Endothelial cell of umbilical vein (primary cell): ENCODE measurements at regions of chr12 and their contacts with region 1.

Region 1: DNA sequence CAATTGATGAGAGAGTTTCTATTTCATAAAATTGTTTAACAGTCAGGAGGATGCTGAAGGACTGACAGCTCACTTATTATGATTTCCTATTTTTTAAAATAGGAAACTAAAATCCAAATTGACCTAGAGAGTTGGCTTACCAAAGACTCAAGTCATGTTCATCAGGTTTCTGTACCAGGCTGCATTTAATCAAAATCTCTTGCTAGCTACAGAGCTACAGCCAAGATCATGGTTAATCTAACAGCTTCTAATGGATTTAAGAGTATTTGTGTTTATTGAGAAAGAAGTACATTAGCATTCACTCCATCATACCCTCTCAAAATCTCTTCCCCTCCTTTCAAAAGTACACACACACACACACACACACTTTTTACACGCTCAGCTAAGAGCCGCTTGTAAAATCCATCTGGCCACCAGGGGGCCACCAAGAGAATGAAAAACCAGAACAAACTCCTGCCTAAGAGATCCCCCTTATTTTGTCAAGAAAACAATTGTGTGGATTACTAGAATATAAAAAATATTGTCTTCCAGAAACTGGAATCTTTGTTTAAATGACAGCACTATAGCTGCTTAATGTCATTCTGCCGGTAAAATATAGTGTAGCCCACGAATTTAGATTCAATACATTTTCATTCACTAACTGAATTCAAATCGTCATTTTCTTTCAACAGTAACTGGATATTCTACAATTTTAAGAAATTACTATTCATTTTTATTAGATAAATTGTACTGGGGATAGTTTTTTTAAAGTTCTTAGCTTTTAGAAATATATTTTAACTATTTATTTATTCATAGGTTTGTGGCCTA is 334.0 kb downstream of the BTG1 start:
- DNase-seq: peak; percentile 79
- H3K4me3 ChIP-seq: no peak overlapping the region
- H3K27ac ChIP-seq: no peak overlapping the region
- H3K4me1 ChIP-seq: no peaks in the 10 kb centered on the region
- H3K27me3 ChIP-seq: no peaks in the 10 kb centered on the region
- CTCF ChIP-seq: peak; percentile 60 to 72
- POLR2A ChIP-seq: no peak

Region 2: GRCh38 chr12:91801048-91801447 is 10.6 kb before region 1 on chr12:
- CTCF ChIA-PET with region 1: interaction called, 21 read pairs
- POLR2A ChIA-PET with region 1: no interaction called
- dilution Hi-C with region 1: no loop called
- intact Hi-C with region 1: no loop called
- DNase-seq: no peak
- H3K4me3 ChIP-seq: no peak overlapping the region
- H3K27ac ChIP-seq: no peak overlapping the region
- H3K4me1 ChIP-seq: no peaks in the 10 kb centered on the region
- H3K27me3 ChIP-seq: no peaks in the 10 kb centered on the region
- CTCF ChIP-seq: no peak
- POLR2A ChIP-seq: no peak

Region 3: DNA sequence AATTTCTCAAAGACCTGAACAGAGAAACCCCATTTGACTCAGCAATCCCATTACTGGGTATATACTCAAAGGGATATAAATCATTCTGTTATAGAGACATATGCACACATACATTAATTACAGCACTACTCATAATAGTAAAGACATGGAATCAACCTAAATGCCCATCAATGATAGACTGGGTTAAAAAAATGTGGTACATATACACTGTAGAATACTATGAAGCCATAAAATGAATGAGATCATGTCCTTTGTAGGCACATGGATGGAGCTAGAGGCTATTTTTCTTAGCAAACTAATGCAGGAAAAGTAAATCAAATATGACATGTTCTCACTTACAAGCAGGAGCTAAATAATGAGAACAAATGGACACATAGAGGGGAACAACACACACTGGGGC is 30.1 kb after region 1 on chr12:
- CTCF ChIA-PET with region 1: interaction called, 10 read pairs
- POLR2A ChIA-PET with region 1: no interaction called
- dilution Hi-C with region 1: no loop called
- intact Hi-C with region 1: no loop called
- DNase-seq: no peak
- H3K4me3 ChIP-seq: no peak overlapping the region
- H3K27ac ChIP-seq: no peak overlapping the region
- H3K4me1 ChIP-seq: no peaks in the 10 kb centered on the region
- H3K27me3 ChIP-seq: no peaks in the 10 kb centered on the region
- CTCF ChIP-seq: no peak
- POLR2A ChIP-seq: no peak

Region 4: GRCh38 chr12:91991399-91992187 is 179.9 kb after region 1 on chr12:
- CTCF ChIA-PET with region 1: interaction called, 29 read pairs
- POLR2A ChIA-PET with region 1: no interaction called
- dilution Hi-C with region 1: no loop called
- intact Hi-C with region 1: loop called (anchors 2 kb)
- DNase-seq: peak; percentile 55
- H3K4me3 ChIP-seq: no peak overlapping the region
- H3K27ac ChIP-seq: peak overlapping the region; percentile 94
- H3K4me1 ChIP-seq: peaks cover 69% of the 10 kb centered on the region
- H3K27me3 ChIP-seq: no peaks in the 10 kb centered on the region
- CTCF ChIP-seq: no peak
- POLR2A ChIP-seq: no peak

Region 5: DNA sequence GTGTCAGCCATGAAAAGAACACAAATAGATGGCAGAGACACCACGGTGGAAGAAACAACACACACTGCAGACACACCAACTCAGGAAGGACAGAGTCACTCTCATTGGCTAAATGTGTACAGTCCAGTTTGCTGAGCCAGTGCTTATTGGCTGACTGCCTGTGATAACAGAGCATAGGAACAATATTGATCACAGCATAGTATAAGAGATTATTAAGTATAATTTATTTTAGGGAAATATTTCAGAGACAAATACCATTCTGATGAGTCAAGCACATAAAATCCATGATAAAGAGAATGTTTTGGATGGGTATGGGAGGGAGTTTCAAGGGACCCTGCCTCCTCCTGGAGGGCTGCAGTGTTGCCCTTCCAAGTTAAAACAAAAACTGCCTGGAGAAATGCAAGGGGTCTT is 283.1 kb after region 1 on chr12:
- CTCF ChIA-PET with region 1: interaction called, 3 read pairs
- POLR2A ChIA-PET with region 1: no interaction called
- dilution Hi-C with region 1: no loop called
- intact Hi-C with region 1: loop called (anchors 2 kb)
- DNase-seq: peak; percentile 44
- H3K4me3 ChIP-seq: no peak overlapping the region
- H3K27ac ChIP-seq: peak overlapping the region; percentile 49
- H3K4me1 ChIP-seq: peaks cover 18% of the 10 kb centered on the region
- H3K27me3 ChIP-seq: no peaks in the 10 kb centered on the region
- CTCF ChIP-seq: peak in 1 of 2 donors; percentile 10
- POLR2A ChIP-seq: no peak

Region 6: DNA sequence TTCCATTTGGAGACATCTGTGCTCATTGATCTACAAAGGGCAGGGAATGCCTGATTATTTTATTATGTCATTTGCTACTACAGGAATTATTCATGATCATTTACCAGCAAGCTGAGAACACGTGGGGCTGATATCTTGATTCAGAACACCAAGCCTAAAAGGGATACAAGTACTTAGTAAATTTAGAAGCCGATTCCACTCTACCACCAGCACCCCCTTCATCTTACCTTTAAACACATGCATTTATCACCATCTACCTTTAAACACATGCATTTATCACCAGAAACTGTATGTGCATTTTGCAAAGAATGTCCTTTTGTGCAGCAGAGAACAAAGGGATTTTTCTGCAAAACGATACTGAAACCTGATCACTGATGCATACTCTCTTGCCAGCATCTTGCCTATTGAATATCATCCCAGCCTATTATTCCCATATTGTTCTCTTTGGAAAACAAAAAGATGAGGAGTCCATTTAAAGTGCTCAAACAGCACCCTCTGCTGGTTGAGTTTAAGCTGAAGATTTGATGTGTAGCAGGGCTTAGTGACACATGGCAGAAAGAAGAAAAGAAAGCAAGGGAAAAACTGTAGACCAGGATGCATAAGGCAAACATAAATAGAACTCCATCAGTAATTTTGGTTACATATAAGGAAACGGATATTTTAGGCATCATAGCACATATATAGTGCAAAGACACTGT is 758.5 kb after region 1 on chr12:
- CTCF ChIA-PET with region 1: interaction called, 35 read pairs
- POLR2A ChIA-PET with region 1: no interaction called
- dilution Hi-C with region 1: no loop called
- intact Hi-C with region 1: loop called (anchors 1 kb)
- DNase-seq: peak; percentile 87
- H3K4me3 ChIP-seq: no peak overlapping the region
- H3K27ac ChIP-seq: no peak overlapping the region
- H3K4me1 ChIP-seq: no peaks in the 10 kb centered on the region
- H3K27me3 ChIP-seq: no peaks in the 10 kb centered on the region
- CTCF ChIP-seq: peak; percentile 43 to 45
- POLR2A ChIP-seq: no peak

Region 7: GRCh38 chr12:92649511-92650227 is 838.0 kb after region 1 on chr12:
- CTCF ChIA-PET with region 1: interaction called, 6 read pairs
- POLR2A ChIA-PET with region 1: no interaction called
- dilution Hi-C with region 1: no loop called
- intact Hi-C with region 1: loop called (anchors 1 kb)
- DNase-seq: peak; percentile 75
- H3K4me3 ChIP-seq: no peak overlapping the region
- H3K27ac ChIP-seq: no peak overlapping the region
- H3K4me1 ChIP-seq: no peaks in the 10 kb centered on the region
- H3K27me3 ChIP-seq: no peaks in the 10 kb centered on the region
- CTCF ChIP-seq: peak; percentile 69 to 70
- POLR2A ChIP-seq: no peak